HepG2 (cell line): ENCODE measurements at regions of chr3 and their contacts with region 1.

Region 1: GRCh38 chr3:150118219-150118618 is 147.5 kb upstream of the PFN2 start:
- DNase-seq: no peak
- ATAC-seq: no peak
- H3K4me3 ChIP-seq: no peak overlapping the region
- H3K27ac ChIP-seq: no peak overlapping the region
- H3K4me1 ChIP-seq: no peaks in the 10 kb centered on the region
- H3K27me3 ChIP-seq: no peaks in the 10 kb centered on the region
- CTCF ChIP-seq: no peak
- EP300 ChIP-seq: no peak
- POLR2A ChIP-seq: no peak
- RAD21 ChIP-seq: no peak

Region 2: GRCh38 chr3:150132101-150132749 is 14.0 kb after region 1 on chr3:
- CTCF ChIA-PET with region 1: no interaction called
- POLR2A ChIA-PET with region 1: no interaction called
- in situ Hi-C with region 1: no loop called
- intact Hi-C with region 1: loop called (anchors 2 kb)
- DNase-seq: no peak
- ATAC-seq: no peak
- H3K4me3 ChIP-seq: no peak overlapping the region
- H3K27ac ChIP-seq: no peak overlapping the region
- H3K4me1 ChIP-seq: no peaks in the 10 kb centered on the region
- H3K27me3 ChIP-seq: no peaks in the 10 kb centered on the region; a peak in 1 of 5 replicates
- CTCF ChIP-seq: no peak
- EP300 ChIP-seq: no peak
- POLR2A ChIP-seq: no peak
- RAD21 ChIP-seq: no peak

Region 3: GRCh38 chr3:150238998-150239619 is 120.9 kb after region 1 on chr3:
- CTCF ChIA-PET with region 1: no interaction called
- POLR2A ChIA-PET with region 1: no interaction called
- in situ Hi-C with region 1: no loop called
- intact Hi-C with region 1: no loop called
- DNase-seq: peak; percentile 25
- ATAC-seq: peak; percentile 82
- H3K4me3 ChIP-seq: no peak overlapping the region
- H3K27ac ChIP-seq: no peak overlapping the region
- H3K4me1 ChIP-seq: 0 out of 2 replicates have a peak, but pooled peaks cover 4% of the 10 kb centered on the region
- H3K27me3 ChIP-seq: no peaks in the 10 kb centered on the region; a peak in 1 of 5 replicates
- CTCF ChIP-seq: peak; percentile 72
- EP300 ChIP-seq: no peak
- POLR2A ChIP-seq: no peak
- RAD21 ChIP-seq: no peak; the same call in 1 of the 2 replicates